ACHN (cell line): ENCODE measurements at regions of chr2 and their contacts with region 1.

Region 1: DNA sequence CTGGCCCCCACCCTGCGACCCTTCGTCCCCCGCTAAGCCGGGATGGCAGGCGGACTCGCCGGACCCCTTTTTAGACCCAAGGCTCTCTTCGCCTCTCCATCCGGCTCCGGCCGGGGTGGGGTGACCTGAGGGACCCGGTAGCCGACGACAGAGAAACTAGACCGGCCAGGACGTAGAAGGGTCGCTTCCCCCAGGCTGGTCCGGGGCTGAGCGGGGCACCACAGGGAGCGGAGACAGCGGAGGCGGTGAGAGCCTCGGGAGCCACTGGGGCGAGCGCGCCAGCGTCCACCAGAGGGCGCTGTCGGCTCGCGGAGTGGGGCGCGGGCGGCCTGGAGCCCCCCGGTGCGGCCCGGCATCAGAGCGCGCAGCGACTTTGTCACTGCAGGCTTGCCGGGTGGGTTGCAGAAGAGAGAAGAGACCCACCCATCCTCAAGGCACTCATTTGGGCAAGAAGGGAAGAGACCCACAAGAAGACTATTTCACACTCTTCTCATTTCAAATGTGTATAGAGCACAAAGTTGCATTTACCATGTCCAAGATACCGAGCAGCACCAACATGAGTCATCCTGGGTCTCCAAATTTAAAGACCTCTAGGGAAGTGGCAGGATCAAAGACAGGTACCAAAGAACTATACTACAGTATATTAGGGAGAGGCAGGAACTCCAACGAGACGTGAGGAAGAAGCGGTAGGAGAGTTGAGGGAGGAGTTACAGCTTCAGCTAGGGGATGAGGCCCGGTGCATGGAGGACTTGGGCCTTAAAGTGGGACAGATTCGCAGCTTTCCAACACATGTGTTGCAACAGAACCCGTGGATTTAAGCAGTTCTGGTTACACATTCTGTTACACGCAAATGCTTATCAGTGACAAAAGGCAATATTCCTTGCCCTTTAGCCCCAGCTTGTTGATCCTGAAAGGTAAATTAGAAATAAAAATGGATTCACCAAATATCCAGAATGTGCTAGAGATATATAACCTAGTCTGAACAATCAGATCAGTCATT is 7.6 kb upstream of the PRKCE start:
- DNase-seq: peak; percentile 76

Region 2: DNA sequence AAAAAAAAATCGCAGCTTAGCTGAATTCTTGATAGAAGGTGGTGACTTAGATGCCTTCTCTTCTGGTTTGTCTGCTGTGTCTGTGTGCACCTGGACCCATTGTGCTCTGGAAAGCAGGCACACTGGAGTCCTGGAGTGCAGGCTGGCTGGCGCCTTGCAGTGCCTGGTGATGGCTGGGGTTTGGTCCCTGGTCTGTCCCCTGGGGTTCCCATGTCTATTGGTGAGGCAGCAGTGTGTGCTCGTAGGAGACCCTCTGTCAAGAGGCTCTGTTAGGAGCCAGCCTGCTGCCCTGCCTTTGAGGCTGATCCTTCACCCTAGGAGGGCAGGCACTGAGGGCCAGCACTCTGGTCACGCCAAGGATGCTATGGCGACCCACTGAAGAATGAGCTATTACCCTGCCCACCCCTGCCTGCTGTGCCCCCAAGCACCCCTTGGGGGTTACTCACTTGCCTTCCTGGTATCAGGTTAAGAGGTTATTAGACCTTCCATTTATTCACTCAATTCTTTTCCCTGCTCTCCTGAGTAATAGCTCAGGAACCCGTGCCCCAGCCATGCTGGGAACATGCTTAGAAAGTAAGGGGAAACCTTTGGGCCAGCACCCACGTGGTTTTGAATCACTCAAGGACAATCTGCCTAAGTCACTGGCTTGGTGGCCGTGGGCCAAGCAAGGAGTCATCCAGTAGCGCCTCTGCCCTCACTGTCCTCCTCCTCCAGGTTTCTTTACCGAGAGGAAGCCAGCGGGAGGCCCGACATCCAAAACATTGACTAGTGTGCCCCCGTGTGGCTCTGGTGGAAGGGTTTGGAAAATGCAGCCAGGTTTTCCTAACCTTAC is 292.2 kb after region 1 on chr2:
- in situ Hi-C with region 1: loop called (anchors 25 kb)
- DNase-seq: peak; percentile 97

Region 3: GRCh38 chr2:46142546-46143428 is 498.9 kb after region 1 on chr2:
- in situ Hi-C with region 1: no loop called
- DNase-seq: peak; percentile 9